ENCODE measurements at regions of chr5 and their contacts with region 1.

Region 1: DNA sequence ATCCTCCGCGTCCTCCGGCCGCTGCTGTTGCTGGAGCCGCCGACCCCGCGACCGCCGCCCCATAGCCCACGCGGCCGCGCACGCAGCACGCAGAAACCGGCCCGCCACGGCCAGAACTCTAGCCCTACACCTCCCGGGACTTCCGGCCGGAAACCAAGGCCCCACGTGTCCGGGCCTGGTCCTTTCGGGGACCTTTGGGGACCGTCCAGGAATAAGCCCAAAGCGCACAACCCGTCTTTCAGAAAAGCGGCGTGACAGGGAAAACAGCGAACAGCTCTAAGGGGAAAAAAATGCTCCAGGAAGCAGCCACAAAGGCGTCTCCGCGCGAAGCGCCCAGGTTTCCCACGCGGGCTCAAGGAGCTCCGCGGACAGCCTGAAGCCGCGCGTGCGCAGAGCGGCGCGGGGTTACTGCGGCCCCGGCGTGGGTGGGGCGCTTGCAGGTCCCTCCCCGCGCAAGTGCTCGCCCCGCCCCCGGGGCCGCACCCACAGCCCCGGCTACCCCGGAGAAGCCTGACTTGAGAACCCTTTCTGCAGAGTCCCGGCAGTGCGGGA is at the starts of genes NSUN2 and SRD5A1:
- DNase-seq: peak; percentile 92 to 97 (median 96)
- H3K4me3 ChIP-seq: peak within 1 kb of the TSS; percentile 84 to 89 (median 86)
- H3K27ac ChIP-seq: peak within 1 kb of the TSS; percentile 95 to 97
- H3K4me1 ChIP-seq: peaks cover 0 to 10% (median 4%) of the 10 kb centered on the region in 3 donors
- H3K27me3 ChIP-seq: no peaks in the 10 kb centered on the region
- CTCF ChIP-seq: no peak
- total RNA-seq, gene NSUN2: 48.9 TPM
- total RNA-seq, gene SRD5A1: 13.1 TPM

Region 2: GRCh38 chr5:6745706-6746222 is 112.8 kb after region 1 on chr5:
- intact Hi-C with region 1: loop called (anchors 10 kb)
- DNase-seq: peak in 2 of 5 donors; percentile 48 to 67
- H3K4me3 ChIP-seq: no peak overlapping the region
- H3K27ac ChIP-seq: no peak overlapping the region
- H3K4me1 ChIP-seq: peaks cover 0 to 3% (median 0%) of the 10 kb centered on the region in 3 donors
- H3K27me3 ChIP-seq: no peaks in the 10 kb centered on the region
- CTCF ChIP-seq: peak; percentile 70